H1 (cell line): ENCODE measurements at regions of chr17 and their contacts with region 1.

Region 1: DNA sequence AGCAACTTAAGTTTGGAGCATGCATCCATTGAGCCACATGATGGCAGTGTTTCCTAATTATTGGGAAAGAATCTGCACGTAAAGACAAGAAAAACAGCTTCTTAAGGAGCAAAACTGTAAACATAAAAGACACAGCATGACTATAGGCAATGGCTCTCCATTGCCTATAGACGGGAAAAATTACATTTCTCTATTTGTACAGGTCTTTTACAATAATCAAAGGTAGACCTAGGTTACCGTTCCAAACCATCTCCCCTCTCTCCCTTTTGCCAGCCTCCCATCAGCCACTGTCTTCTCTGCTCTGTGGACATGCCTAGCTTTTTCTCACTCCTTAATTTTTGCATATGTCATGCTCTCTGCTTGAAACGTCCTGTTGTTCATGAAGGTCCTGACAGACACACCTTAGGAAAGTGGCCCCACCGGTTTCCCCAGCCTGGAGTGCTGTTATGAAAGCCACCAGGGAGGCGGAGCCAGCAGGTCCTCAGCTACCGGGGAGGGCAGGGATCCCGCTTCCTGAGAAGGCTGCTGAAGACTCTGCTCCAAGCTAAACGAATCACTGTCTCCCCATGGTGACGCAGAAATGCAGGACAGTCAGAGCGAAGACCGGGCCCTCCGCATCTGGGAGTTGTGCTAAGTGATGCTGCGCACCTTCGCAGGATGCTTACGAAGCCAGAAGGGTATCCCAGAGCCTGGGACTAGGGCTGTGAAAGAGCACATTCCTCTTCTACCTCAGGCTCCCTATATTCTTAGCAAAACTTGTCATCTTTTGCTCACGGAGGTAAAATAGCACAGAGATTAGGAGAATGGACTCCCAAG is 2.2 kb upstream of the SLC16A11 start:
- DNase-seq: peak in 1 of 2 experiments; percentile 72
- H3K4me3 ChIP-seq: peak overlapping the region; percentile 30 to 64 (median 34); a peak in 7 of 8 replicates
- H3K27ac ChIP-seq: no peak overlapping the region
- H3K4me1 ChIP-seq: peaks cover 0 to 18% (median 16%) of the 10 kb centered on the region in 4 experiments; a peak in 5 of 7 replicates
- H3K27me3 ChIP-seq: peaks cover 3 to 33% (median 32%) of the 10 kb centered on the region in 4 experiments
- CTCF ChIP-seq: peak in 2 of 3 experiments; percentile 53 to 68; a peak in 3 of 4 replicates
- EP300 ChIP-seq: no peak
- POLR2A ChIP-seq: no peak
- RAD21 ChIP-seq: peak; percentile 89 to 91

Region 2: DNA sequence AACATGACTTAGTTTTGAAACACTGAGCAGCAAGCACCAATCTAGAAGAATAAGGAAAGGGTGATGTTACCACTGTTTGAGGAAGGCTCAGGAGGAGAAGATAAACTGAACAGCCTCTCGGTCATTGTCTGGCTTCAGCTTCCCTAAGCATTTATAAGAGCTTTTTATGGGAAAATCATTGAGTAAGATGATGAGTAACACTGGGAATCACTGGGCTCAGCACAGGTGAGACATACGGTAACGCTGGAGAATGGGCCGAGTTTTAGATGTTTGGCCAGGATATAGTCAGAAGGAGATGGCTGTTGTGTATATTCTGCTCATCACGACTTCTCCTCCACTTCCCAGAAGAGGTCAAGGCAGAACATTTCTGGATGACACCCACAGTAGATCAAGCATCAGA is 92.4 kb before region 1 on chr17:
- CTCF ChIA-PET with region 1: no interaction called
- POLR2A ChIA-PET with region 1: no interaction called
- DNase-seq: no peak
- H3K4me3 ChIP-seq: no peak overlapping the region
- H3K27ac ChIP-seq: no peak overlapping the region
- H3K4me1 ChIP-seq: no peaks in the 10 kb centered on the region
- H3K27me3 ChIP-seq: no peaks in the 10 kb centered on the region; a peak in 1 of 7 replicates
- CTCF ChIP-seq: no peak
- EP300 ChIP-seq: no peak
- POLR2A ChIP-seq: no peak
- RAD21 ChIP-seq: no peak

Region 3: GRCh38 chr17:6981426-6981825 is 64.7 kb before region 1 on chr17:
- CTCF ChIA-PET with region 1: no interaction called
- POLR2A ChIA-PET with region 1: no interaction called
- DNase-seq: no peak
- H3K4me3 ChIP-seq: no peak overlapping the region
- H3K27ac ChIP-seq: no peak overlapping the region
- H3K4me1 ChIP-seq: no peaks in the 10 kb centered on the region
- H3K27me3 ChIP-seq: no peaks in the 10 kb centered on the region
- CTCF ChIP-seq: no peak
- EP300 ChIP-seq: no peak
- POLR2A ChIP-seq: no peak
- RAD21 ChIP-seq: no peak

Region 4: GRCh38 chr17:7122381-7122780 is 76.3 kb after region 1 on chr17:
- CTCF ChIA-PET with region 1: interaction called, 14 read pairs
- POLR2A ChIA-PET with region 1: no interaction called
- DNase-seq: no peak
- H3K4me3 ChIP-seq: no peak overlapping the region
- H3K27ac ChIP-seq: no peak overlapping the region
- H3K4me1 ChIP-seq: no peaks in the 10 kb centered on the region
- H3K27me3 ChIP-seq: no peaks in the 10 kb centered on the region
- CTCF ChIP-seq: no peak
- EP300 ChIP-seq: no peak
- POLR2A ChIP-seq: no peak
- RAD21 ChIP-seq: no peak

Region 5: DNA sequence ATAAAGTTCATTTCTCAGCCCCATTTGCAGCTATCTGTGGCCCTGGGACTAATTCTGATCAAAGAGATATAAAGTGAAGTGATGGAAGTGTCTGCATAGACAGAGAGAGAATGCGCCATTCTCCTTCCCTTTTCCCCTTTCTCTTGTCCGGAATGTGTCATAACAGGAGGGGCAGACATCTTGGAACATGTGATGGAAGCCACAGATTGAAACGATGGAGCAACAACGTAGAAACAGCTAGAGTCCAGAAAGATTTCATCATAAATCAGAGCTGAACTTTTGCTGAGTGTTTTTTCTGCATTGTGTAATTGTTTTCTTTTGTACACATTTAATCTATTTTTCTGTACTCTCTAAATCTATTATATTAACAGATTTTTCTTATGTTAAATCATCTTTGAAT is 121.7 kb after region 1 on chr17:
- CTCF ChIA-PET with region 1: interaction called, 60 read pairs
- POLR2A ChIA-PET with region 1: interaction called, 6 read pairs
- DNase-seq: no peak
- H3K4me3 ChIP-seq: no peak overlapping the region
- H3K27ac ChIP-seq: no peak overlapping the region
- H3K4me1 ChIP-seq: peaks cover 0 to 4% (median under 1%) of the 10 kb centered on the region in 4 experiments; a peak in 1 of 7 replicates
- H3K27me3 ChIP-seq: no peaks in the 10 kb centered on the region
- CTCF ChIP-seq: no peak
- EP300 ChIP-seq: no peak
- POLR2A ChIP-seq: no peak
- RAD21 ChIP-seq: no peak

Region 6: DNA sequence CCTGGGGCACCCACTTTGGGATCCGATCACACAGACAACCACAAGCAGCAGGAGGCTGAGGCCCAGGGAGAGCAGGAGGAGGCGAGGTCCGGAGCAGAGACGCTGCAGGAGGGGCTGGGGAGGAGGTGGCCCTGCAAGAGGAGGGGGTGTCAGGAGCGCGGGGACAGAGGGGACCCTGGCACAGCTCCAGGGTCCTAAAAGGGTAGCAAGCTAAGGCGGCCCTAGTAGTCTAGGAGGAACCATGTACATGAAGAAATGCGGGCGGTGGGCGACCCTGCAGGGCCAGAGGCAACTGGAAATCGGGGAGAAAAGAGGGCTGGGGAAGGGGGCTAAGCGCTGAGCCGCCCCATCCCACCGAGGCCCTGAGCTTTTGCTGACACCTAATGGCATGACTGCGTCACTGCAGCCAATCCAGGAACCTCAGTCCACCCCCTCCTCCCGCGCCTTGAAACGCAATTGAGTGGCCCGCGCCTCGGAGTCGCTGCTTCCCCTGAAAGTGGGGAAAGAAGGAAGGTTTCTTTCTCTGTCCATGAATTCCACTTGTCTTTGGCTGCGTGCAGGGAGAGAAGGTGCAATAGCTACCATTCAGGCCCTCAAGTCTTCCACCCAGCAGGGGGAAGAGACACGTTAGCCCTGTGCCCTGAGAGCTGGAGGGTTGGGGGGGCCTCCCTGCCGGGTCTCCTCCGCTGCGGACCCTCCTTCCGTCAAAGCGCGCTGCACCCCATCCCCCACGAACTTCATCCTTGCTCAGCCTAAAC is 131.3 kb after region 1 on chr17:
- CTCF ChIA-PET with region 1: interaction called, 50 read pairs
- POLR2A ChIA-PET with region 1: interaction called, 6 read pairs
- DNase-seq: peak in 1 of 2 experiments; percentile 90
- H3K4me3 ChIP-seq: peak overlapping the region; percentile 52 to 86 (median 58)
- H3K27ac ChIP-seq: no peak overlapping the region
- H3K4me1 ChIP-seq: peaks cover 0 to 23% (median 11%) of the 10 kb centered on the region in 4 experiments; a peak in 6 of 7 replicates
- H3K27me3 ChIP-seq: peaks cover 0 to 28% (median 21%) of the 10 kb centered on the region in 4 experiments; a peak in 6 of 7 replicates
- CTCF ChIP-seq: peak; percentile 76 to 92 (median 91)
- EP300 ChIP-seq: peak in 1 of 2 experiments; percentile 52; a peak in 1 of 3 replicates
- POLR2A ChIP-seq: peak in 1 of 2 experiments; percentile 28; a peak in 1 of 3 replicates
- RAD21 ChIP-seq: peak; percentile 84

Region 7: GRCh38 chr17:7186241-7186640 is 140.1 kb after region 1 on chr17:
- CTCF ChIA-PET with region 1: interaction called, 32 read pairs
- POLR2A ChIA-PET with region 1: no interaction called
- DNase-seq: no peak
- H3K4me3 ChIP-seq: no peak overlapping the region
- H3K27ac ChIP-seq: no peak overlapping the region
- H3K4me1 ChIP-seq: no peaks in the 10 kb centered on the region
- H3K27me3 ChIP-seq: no peaks in the 10 kb centered on the region
- CTCF ChIP-seq: peak; percentile 2 to 35 (median 20); a peak in 2 of 4 replicates
- EP300 ChIP-seq: no peak
- POLR2A ChIP-seq: 0 out of 3 replicates have a peak, but pooled peaks of 1 of the 2 experiments have one; percentile 29
- RAD21 ChIP-seq: no peak